A673 (cell line): ENCODE measurements at regions of chr5 and their contacts with region 1.

Region 1: GRCh38 chr5:109611505-109611904 is 78.2 kb upstream of the MAN2A1 start:
- DNase-seq: peak; percentile 99
- H3K4me3 ChIP-seq: no peak overlapping the region
- H3K27ac ChIP-seq: peak overlapping the region; percentile 99
- H3K4me1 ChIP-seq: peaks cover 57% of the 10 kb centered on the region
- H3K27me3 ChIP-seq: no peaks in the 10 kb centered on the region
- CTCF ChIP-seq: no peak

Region 2: DNA sequence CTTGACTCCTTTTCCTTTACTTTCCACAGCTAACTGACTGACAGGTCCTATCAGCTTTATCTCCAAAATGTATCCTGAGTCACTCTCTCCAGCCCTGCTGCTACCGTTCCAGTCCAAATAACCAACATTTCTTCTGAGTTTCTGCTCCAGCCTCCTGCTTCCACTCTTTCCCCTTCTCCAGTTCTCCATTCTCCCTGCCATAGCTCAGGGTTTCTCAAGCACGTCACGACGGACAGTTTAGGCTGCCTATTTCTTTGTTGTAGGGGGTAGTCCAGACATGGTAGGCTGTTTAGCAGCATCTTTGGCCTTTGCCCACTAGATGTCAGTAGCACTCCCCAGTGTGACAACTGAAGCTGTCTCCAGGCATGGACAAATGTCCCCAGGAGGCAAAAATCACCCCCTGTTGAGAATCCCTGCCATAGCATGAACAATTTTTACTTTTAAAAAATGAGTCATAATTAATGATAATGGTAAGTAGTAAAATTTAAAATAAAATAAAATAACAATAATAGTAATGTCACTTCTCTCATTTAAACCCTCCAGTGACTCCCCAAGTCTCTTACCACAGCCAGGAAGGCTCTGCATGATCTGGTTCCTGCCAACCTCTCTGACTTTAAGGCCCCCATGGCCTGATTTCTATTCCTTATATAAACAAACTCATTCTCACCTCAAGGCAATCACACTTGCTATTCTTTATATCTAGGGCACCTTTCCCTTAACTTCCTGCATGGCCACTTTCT is 969.2 kb before region 1 on chr5:
- CTCF ChIA-PET with region 1: interaction called, 3 read pairs
- POLR2A ChIA-PET with region 1: no interaction called
- intact Hi-C with region 1: loop called (anchors 5 kb)
- DNase-seq: peak; percentile 92
- H3K4me3 ChIP-seq: no peak overlapping the region
- H3K27ac ChIP-seq: peak overlapping the region; percentile 43
- H3K4me1 ChIP-seq: peaks cover 26% of the 10 kb centered on the region
- H3K27me3 ChIP-seq: no peaks in the 10 kb centered on the region
- CTCF ChIP-seq: peak; percentile 92

Region 3: DNA sequence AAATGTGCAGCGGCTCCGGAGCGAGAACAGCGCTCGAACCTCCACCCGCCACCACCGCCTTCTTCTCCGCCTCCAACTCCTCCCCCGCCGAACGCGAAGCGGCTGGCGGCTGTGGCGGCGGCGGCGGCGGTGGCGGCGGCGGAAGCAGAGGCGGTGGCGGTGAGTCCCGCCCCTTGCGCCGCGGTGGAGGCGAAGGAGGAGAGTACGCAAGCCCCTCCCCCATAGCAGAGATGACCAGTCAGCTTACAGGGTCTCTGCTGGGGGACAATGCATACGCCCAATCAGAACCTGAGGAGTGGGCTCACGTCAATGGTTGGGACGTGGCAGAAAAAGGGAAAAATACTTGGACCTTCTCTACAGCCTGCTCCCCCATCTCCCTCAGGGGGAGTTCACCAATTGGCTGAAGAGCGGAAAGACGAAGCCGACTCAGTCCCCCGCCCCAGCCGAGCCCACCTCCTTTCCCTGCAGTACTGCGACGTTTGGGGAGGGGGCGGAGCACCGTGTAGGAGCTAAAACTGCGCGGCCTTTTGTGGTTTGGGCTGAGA is 201.6 kb before region 1 on chr5 and contains the start of gene PJA2:
- CTCF ChIA-PET with region 1: no interaction called
- POLR2A ChIA-PET with region 1: no interaction called
- intact Hi-C with region 1: loop called (anchors 2 kb)
- DNase-seq: peak; percentile 100
- H3K4me3 ChIP-seq: peak within 1 kb of the TSS; percentile 61
- H3K27ac ChIP-seq: peak within 1 kb of the TSS; percentile 96
- H3K4me1 ChIP-seq: peaks cover 16% of the 10 kb centered on the region
- H3K27me3 ChIP-seq: no peaks in the 10 kb centered on the region
- CTCF ChIP-seq: no peak
- total RNA-seq, gene PJA2: 47.3 and 55.2 TPM in 2 replicates

Region 4: GRCh38 chr5:109645707-109646192 is 34.2 kb after region 1 on chr5:
- CTCF ChIA-PET with region 1: no interaction called
- POLR2A ChIA-PET with region 1: interaction called, 4 read pairs
- intact Hi-C with region 1: loop called (anchors 2 kb)
- DNase-seq: peak; percentile 95
- H3K4me3 ChIP-seq: peak overlapping the region; percentile 22
- H3K27ac ChIP-seq: peak overlapping the region; percentile 97
- H3K4me1 ChIP-seq: peaks cover 59% of the 10 kb centered on the region
- H3K27me3 ChIP-seq: no peaks in the 10 kb centered on the region
- CTCF ChIP-seq: no peak

Region 5: DNA sequence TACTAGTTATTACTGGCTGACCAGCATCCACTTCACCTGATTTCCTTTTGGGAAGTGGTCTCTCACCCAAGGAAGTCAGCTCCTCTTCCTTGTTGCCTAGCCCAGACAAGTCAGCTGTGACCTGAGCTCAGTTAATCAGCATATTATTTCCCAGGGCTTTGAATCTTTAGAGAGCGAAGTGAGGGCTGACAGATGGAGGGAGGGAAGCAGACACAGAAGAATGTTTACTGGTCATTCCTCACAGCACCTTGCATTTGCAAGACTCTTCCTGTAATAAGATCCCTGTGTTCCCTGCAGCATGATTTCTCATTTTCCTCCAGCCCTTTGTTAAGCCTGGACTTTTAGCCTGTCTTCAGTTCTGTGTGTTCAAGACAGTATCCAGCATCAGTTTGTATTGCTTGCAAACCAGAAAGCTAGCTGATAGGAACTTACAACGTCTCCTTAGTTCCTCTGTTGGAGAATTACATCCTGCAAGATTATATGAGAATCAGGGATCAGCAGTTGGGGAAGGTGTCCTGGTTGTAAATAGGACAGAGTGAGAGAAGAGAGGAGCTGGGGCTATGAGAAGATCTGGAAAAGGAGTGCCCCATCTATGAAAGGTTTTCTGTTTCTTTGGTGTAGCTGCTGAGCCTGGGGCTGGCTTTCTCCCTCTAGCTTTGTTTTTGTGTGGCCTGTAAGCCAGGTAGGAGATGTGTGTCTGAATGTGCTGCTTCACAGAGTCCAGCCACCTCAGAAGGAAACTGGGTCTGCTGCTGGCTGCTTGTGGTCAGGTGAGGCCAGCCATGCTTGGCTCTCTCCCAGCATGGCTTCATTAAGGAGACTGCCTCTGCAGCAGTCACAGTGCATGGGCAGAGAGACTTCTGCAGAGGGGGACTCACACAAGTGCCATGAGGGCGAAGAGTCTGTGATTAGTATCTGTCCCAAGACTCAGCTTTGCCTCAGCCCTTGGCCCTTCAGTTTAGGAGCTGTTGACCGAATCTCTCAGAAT is 128.5 kb after region 1 on chr5:
- CTCF ChIA-PET with region 1: no interaction called
- POLR2A ChIA-PET with region 1: no interaction called
- intact Hi-C with region 1: loop called (anchors 5 kb)
- DNase-seq: no peak
- H3K4me3 ChIP-seq: no peak overlapping the region
- H3K27ac ChIP-seq: peak overlapping the region; percentile 66
- H3K4me1 ChIP-seq: peaks cover 66% of the 10 kb centered on the region
- H3K27me3 ChIP-seq: no peaks in the 10 kb centered on the region
- CTCF ChIP-seq: no peak

Region 6: DNA sequence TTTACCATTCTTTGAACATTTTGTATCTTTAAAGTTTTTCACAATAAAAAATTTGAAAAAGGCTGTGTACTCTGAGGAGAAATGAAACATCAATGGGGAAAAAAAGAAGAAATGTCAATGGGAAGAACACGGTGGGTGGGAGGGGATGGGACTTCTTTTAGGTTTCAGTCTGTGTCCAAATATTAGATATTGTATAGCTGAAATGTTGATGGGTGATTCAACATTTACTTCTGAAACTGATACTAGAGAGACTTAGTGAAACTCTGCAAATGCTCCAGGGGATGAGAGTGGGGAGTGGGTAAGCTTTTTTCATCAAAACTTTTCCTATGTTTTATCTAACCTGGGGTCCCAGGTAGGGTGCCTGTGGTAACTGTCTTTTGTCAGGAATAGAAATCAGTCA is 390.1 kb after region 1 on chr5:
- CTCF ChIA-PET with region 1: no interaction called
- POLR2A ChIA-PET with region 1: no interaction called
- intact Hi-C with region 1: loop called (anchors 5 kb)
- DNase-seq: no peak
- H3K4me3 ChIP-seq: no peak overlapping the region
- H3K27ac ChIP-seq: no peak overlapping the region
- H3K4me1 ChIP-seq: peaks cover 38% of the 10 kb centered on the region
- H3K27me3 ChIP-seq: no peaks in the 10 kb centered on the region
- CTCF ChIP-seq: no peak